ENCODE measurements at regions of chr12 and their contacts with region 1.

Region 1: DNA sequence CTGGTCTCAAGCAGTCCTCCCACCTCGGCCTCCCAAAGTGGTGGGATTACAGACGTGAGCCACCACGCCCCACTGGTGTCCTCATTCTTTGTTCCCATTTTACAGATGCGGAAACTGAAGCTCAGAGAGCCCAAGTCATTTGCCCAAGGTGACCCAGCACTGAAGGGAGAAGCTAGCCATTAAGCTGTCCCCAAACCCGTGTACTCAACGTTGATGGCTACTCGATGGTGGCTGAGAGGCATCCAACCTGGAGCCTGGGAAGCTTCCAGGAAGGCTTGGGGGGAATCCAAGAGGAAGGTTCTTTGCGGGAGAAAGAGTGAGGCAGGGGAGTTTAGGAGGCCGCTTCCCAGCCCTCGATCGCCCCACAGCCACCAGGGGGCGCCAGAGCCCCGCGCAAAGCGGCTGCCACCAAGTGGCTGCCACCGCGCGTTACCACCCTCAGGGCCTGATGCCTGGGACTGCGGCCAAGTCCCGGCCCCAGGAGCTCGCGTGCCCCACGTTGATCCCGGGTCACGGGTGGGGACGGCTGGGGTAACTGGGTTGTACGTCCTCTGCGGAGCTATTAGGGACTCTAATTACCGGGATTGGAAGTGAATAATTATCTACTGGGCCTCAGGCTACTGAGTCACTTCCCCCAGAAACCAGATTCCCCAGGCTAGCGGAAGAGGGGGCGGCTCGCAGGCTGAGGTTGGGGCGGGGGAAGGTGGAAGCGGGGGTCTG is 8.8 kb upstream of the SH2B3 start:
- DNase-seq: peak; percentile 86

Region 2: GRCh38 chr12:111126331-111126730 is 270.6 kb before region 1 on chr12:
- CTCF ChIA-PET with region 1: no interaction called
- POLR2A ChIA-PET with region 1: no interaction called
- DNase-seq: no peak

Region 3: GRCh38 chr12:111451649-111452129 is 54.8 kb after region 1 on chr12:
- CTCF ChIA-PET with region 1: interaction called, 37 read pairs
- POLR2A ChIA-PET with region 1: interaction called, 4 read pairs
- DNase-seq: peak; percentile 52

Measured in HEK293T (cell line).